ENCODE measurements at regions of chr4 and their contacts with region 1.

Region 1: DNA sequence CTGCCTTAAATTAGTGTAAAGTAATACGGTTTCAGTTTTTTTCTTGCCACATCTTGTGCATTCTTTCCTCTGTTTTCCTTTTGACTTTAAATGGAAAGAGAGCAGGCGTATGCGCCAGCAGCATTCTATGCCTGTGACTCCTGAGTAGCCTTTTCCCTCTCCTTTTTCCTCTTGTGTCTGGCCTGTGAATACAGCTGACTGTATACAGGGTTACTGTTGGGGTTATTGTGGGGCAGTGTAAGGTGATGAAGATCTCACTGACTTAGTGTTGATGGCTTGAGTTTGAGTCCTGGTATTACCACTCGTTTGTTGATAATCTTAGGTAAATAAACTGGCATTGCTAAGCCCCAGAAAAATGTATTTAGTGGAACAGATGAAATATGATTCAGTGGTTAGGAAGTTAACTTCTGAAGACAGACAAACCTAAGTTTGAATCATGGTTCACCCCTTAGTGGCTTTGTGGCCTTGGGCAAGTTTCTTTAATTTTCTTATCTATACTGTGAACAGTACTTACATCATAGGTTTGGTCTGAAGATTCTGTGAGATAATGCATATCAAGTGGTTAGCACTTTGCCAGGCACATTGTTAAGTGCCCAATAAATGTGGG is 105.1 kb downstream of the FNIP2 start:
- DNase-seq: peak in 2 of 35 experiments; percentile 14 to 21
- ATAC-seq: no peak
- H3K4me3 ChIP-seq: no peak overlapping the region
- H3K4me3 Mint-ChIP-seq: no peak overlapping the region
- H3K27ac ChIP-seq: no peak overlapping the region
- H3K27ac Mint-ChIP-seq: no peak overlapping the region
- H3K4me1 ChIP-seq: peaks cover 0 to 2% of the 10 kb centered on the region in 2 experiments
- H3K4me1 Mint-ChIP-seq: peaks cover 3 to 5% (median 4%) of the 10 kb centered on the region in 3 donors
- H3K27me3 ChIP-seq: no peaks in the 10 kb centered on the region
- H3K27me3 Mint-ChIP-seq: no peaks in the 10 kb centered on the region

Region 2: DNA sequence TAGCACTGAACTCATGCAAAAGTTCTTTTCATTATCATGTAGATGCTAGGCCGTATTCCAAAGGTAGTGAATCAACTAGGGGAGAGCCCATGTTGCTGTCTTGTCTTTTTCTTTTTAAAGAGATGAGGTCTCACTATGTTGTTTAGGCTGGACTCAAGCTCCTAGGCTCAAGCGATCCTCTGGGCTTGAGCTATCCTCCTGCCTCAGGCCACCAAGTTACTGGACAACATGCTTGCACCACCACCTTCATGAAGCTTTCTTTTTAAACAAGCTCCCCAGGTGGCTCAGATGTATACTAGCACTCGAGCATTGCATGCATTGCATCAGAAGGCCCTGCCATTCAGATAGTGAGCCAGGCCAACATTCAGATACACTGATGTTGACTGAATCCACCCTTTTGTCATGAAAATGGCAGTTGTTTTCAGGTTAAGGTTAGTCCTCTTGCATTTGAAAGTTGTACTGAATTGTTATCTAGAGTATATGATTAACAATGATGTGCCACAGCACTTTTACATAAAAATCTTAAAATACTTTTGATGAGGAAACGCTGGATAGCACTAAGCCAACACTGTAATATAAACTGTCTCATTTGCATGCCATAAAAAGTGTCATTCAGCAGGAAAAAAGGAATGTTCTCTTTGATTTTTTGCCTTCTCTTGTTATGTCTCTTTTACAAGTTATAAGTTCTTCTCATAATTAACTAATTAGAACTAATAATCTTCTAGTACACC is 28.4 kb before region 1 on chr4:
- CTCF ChIA-PET with region 1: interaction called in 1 of 2 experiments, 11 read pairs
- POLR2A ChIA-PET with region 1: interaction called in 1 of 2 experiments, 7 read pairs
- DNase-seq: no peak
- ATAC-seq: no peak
- H3K4me3 ChIP-seq: no peak overlapping the region
- H3K4me3 Mint-ChIP-seq: no peak overlapping the region
- H3K27ac ChIP-seq: no peak overlapping the region
- H3K27ac Mint-ChIP-seq: no peak overlapping the region
- H3K4me1 ChIP-seq: peaks cover 0 to 2% of the 10 kb centered on the region in 2 experiments
- H3K4me1 Mint-ChIP-seq: peaks cover 3 to 4% (median 3%) of the 10 kb centered on the region in 3 donors
- H3K27me3 ChIP-seq: no peaks in the 10 kb centered on the region
- H3K27me3 Mint-ChIP-seq: no peaks in the 10 kb centered on the region

Region 3: GRCh38 chr4:158891256-158891655 is 17.4 kb after region 1 on chr4:
- CTCF ChIA-PET with region 1: no interaction called
- POLR2A ChIA-PET with region 1: no interaction called
- DNase-seq: no peak
- ATAC-seq: no peak
- H3K4me3 ChIP-seq: no peak overlapping the region
- H3K4me3 Mint-ChIP-seq: no peak overlapping the region
- H3K27ac ChIP-seq: no peak overlapping the region
- H3K27ac Mint-ChIP-seq: no peak overlapping the region
- H3K4me1 ChIP-seq: peaks cover 0 to 3% of the 10 kb centered on the region in 2 experiments
- H3K4me1 Mint-ChIP-seq: peaks cover 0 to 5% (median under 1%) of the 10 kb centered on the region in 3 donors
- H3K27me3 ChIP-seq: no peaks in the 10 kb centered on the region
- H3K27me3 Mint-ChIP-seq: no peaks in the 10 kb centered on the region

Region 4: GRCh38 chr4:158903079-158903456 is 29.2 kb after region 1 on chr4:
- CTCF ChIA-PET with region 1: no interaction called
- POLR2A ChIA-PET with region 1: no interaction called
- DNase-seq: no peak
- ATAC-seq: no peak
- H3K4me3 ChIP-seq: no peak overlapping the region
- H3K4me3 Mint-ChIP-seq: no peak overlapping the region
- H3K27ac ChIP-seq: no peak overlapping the region
- H3K27ac Mint-ChIP-seq: no peak overlapping the region
- H3K4me1 ChIP-seq: peaks cover 0 to 13% of the 10 kb centered on the region in 2 experiments
- H3K4me1 Mint-ChIP-seq: peaks cover 10 to 17% (median 12%) of the 10 kb centered on the region in 3 donors
- H3K27me3 ChIP-seq: no peaks in the 10 kb centered on the region
- H3K27me3 Mint-ChIP-seq: no peaks in the 10 kb centered on the region

Region 5: GRCh38 chr4:158965226-158965625 is 91.3 kb after region 1 on chr4:
- CTCF ChIA-PET with region 1: no interaction called
- POLR2A ChIA-PET with region 1: no interaction called
- DNase-seq: no peak
- ATAC-seq: no peak
- H3K4me3 ChIP-seq: no peak overlapping the region
- H3K4me3 Mint-ChIP-seq: no peak overlapping the region
- H3K27ac ChIP-seq: no peak overlapping the region
- H3K27ac Mint-ChIP-seq: no peak overlapping the region
- H3K4me1 ChIP-seq: no peaks in the 10 kb centered on the region
- H3K4me1 Mint-ChIP-seq: no peaks in the 10 kb centered on the region
- H3K27me3 ChIP-seq: no peaks in the 10 kb centered on the region
- H3K27me3 Mint-ChIP-seq: peaks cover 10 to 12% of the 10 kb centered on the region in 2 donors

Region 6: GRCh38 chr4:159178151-159178546 is 304.3 kb after region 1 on chr4:
- CTCF ChIA-PET with region 1: interaction called, 3 to 10 read pairs
- POLR2A ChIA-PET with region 1: no interaction called
- DNase-seq: no peak
- ATAC-seq: no peak
- H3K4me3 ChIP-seq: no peak overlapping the region
- H3K4me3 Mint-ChIP-seq: no peak overlapping the region
- H3K27ac ChIP-seq: no peak overlapping the region
- H3K27ac Mint-ChIP-seq: no peak overlapping the region
- H3K4me1 ChIP-seq: peaks cover 0 to 3% of the 10 kb centered on the region in 2 experiments
- H3K4me1 Mint-ChIP-seq: peaks cover 27 to 32% (median 29%) of the 10 kb centered on the region in 3 donors
- H3K27me3 ChIP-seq: no peaks in the 10 kb centered on the region
- H3K27me3 Mint-ChIP-seq: peaks cover 0 to 8% of the 10 kb centered on the region in 2 donors

Measured in T-cell (primary cell).